ENCODE measurements at regions of chr12 and their contacts with region 1.

Region 1: GRCh38 chr12:53625946-53626701 is at the start of gene ATF7:
- DNase-seq: peak; percentile 97 to 99
- H3K4me3 ChIP-seq: peak within 1 kb of the TSS; percentile 70 to 94 (median 80)
- H3K27ac ChIP-seq: peak within 1 kb of the TSS; percentile 98
- H3K4me1 ChIP-seq: peaks cover 0 to 7% (median 3%) of the 10 kb centered on the region in 4 experiments; a peak in 4 of 7 replicates
- H3K27me3 ChIP-seq: no peaks in the 10 kb centered on the region
- CTCF ChIP-seq: no peak
- EP300 ChIP-seq: peak in 1 of 2 experiments; percentile 96; a peak in 2 of 3 replicates
- POLR2A ChIP-seq: peak; percentile 78 to 87
- RAD21 ChIP-seq: 0 out of 4 replicates have a peak, but pooled peaks of 1 of the 2 experiments have one; percentile 1
- total RNA-seq, gene ATF7: 16.6 and 18.4 TPM in 2 replicates

Region 2: DNA sequence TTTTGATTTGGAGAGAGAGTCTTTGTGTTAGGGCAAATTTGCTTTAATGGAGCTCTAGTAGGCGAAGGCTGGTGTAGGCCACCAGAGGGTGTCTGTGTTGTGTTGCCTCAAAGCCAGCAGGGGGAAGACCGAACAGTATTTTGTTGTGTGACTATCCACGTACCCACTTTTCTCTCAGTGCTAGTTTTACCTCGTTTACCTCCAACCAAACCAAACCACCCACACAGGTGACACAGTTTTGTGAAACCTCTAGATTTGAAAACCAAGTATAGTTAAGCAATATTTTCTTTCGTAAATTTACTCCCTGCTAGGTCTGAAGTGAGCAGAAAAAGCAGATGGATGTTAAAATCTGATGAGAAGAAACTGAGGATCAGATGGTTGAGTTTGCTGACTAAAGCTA is 82.6 kb before region 1 on chr12:
- CTCF ChIA-PET with region 1: interaction called, 10 read pairs
- POLR2A ChIA-PET with region 1: no interaction called
- DNase-seq: peak in 1 of 2 experiments; percentile 47
- H3K4me3 ChIP-seq: no peak overlapping the region
- H3K27ac ChIP-seq: no peak overlapping the region
- H3K4me1 ChIP-seq: 0 out of 7 replicates have a peak, but pooled peaks cover 0 to 5% (median 0%) of the 10 kb centered on the region in 4 experiments
- H3K27me3 ChIP-seq: no peaks in the 10 kb centered on the region
- CTCF ChIP-seq: peak; percentile 82 to 99 (median 92)
- EP300 ChIP-seq: no peak
- POLR2A ChIP-seq: no peak
- RAD21 ChIP-seq: peak; percentile 82 to 86

Region 3: GRCh38 chr12:53613821-53614220 is 12.3 kb before region 1 on chr12:
- CTCF ChIA-PET with region 1: interaction called, 5 read pairs
- POLR2A ChIA-PET with region 1: interaction called, 11 read pairs
- DNase-seq: no peak
- H3K4me3 ChIP-seq: no peak overlapping the region
- H3K27ac ChIP-seq: no peak overlapping the region
- H3K4me1 ChIP-seq: no peaks in the 10 kb centered on the region
- H3K27me3 ChIP-seq: no peaks in the 10 kb centered on the region
- CTCF ChIP-seq: no peak
- EP300 ChIP-seq: no peak
- POLR2A ChIP-seq: no peak
- RAD21 ChIP-seq: no peak

Region 4: GRCh38 chr12:53638057-53638456 is 11.9 kb after region 1 on chr12:
- CTCF ChIA-PET with region 1: interaction called, 5 read pairs
- POLR2A ChIA-PET with region 1: interaction called, 20 read pairs
- DNase-seq: no peak
- H3K4me3 ChIP-seq: no peak overlapping the region
- H3K27ac ChIP-seq: no peak overlapping the region
- H3K4me1 ChIP-seq: no peaks in the 10 kb centered on the region
- H3K27me3 ChIP-seq: no peaks in the 10 kb centered on the region
- CTCF ChIP-seq: no peak
- EP300 ChIP-seq: no peak
- POLR2A ChIP-seq: no peak
- RAD21 ChIP-seq: no peak

Measured in H1 (cell line).